Common myeloid progenitor, CD34-positive (primary cell): ENCODE measurements at regions of chr11 and their contacts with region 1.

Region 1: GRCh38 chr11:96228473-96228891 is 114.5 kb downstream of the MAML2 start:
- DNase-seq: no peak
- H3K4me3 ChIP-seq: no peak overlapping the region
- H3K27ac ChIP-seq: no peak overlapping the region
- H3K4me1 ChIP-seq: peaks cover 0 to 26% (median 8%) of the 10 kb centered on the region in 4 experiments
- H3K27me3 ChIP-seq: no peaks in the 10 kb centered on the region

Region 2: GRCh38 chr11:96112201-96113128 is 116.0 kb before region 1 on chr11:
- CTCF ChIA-PET with region 1: no interaction called
- POLR2A ChIA-PET with region 1: no interaction called
- DNase-seq: no peak
- H3K4me3 ChIP-seq: no peak overlapping the region
- H3K27ac ChIP-seq: no peak overlapping the region
- H3K4me1 ChIP-seq: no peaks in the 10 kb centered on the region
- H3K27me3 ChIP-seq: no peaks in the 10 kb centered on the region

Region 3: GRCh38 chr11:96143016-96143670 is 85.3 kb before region 1 on chr11:
- CTCF ChIA-PET with region 1: no interaction called
- POLR2A ChIA-PET with region 1: no interaction called
- DNase-seq: peak in 2 of 3 donors; percentile 27 to 39
- H3K4me3 ChIP-seq: no peak overlapping the region
- H3K27ac ChIP-seq: no peak overlapping the region
- H3K4me1 ChIP-seq: no peaks in the 10 kb centered on the region
- H3K27me3 ChIP-seq: no peaks in the 10 kb centered on the region

Region 4: DNA sequence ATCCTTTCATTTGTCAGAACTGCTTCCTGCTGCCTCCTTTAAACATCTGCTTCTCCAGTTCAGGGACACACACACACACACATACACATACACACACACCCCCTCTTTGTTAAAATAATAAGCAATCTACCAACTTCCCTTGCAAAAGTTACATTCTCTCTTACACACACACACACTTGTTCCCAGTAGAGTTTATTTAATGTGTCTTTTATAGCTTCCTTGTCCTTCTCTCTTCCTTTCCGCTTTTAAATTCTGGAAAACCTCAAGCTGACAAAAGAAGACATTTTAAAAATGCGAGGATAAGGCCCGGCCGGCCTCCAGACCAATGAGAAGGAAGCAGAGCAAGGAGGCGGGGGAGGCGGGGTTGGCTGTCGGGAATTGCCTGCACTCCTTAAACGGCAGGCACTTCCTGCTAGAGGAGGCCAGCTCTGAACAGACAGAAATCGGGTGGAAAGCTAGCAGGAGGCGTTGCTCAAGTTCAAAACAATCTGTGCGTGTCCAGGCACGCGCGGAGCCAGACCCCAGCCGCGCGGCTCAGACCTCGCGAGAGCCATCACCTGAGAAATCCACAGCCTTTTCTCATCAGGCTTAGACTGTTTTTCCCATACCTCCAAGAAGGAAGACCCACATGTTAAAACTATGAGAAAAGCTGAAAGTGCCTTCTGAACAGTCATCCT is 14.6 kb after region 1 on chr11:
- CTCF ChIA-PET with region 1: interaction called, 24 read pairs
- POLR2A ChIA-PET with region 1: no interaction called
- DNase-seq: peak; percentile 90 to 95 (median 94)
- H3K4me3 ChIP-seq: peak overlapping the region; percentile 6 to 79 (median 64)
- H3K27ac ChIP-seq: peak overlapping the region; percentile 46 to 87
- H3K4me1 ChIP-seq: peaks cover 26 to 57% (median 46%) of the 10 kb centered on the region in 4 experiments
- H3K27me3 ChIP-seq: no peaks in the 10 kb centered on the region

Region 5: DNA sequence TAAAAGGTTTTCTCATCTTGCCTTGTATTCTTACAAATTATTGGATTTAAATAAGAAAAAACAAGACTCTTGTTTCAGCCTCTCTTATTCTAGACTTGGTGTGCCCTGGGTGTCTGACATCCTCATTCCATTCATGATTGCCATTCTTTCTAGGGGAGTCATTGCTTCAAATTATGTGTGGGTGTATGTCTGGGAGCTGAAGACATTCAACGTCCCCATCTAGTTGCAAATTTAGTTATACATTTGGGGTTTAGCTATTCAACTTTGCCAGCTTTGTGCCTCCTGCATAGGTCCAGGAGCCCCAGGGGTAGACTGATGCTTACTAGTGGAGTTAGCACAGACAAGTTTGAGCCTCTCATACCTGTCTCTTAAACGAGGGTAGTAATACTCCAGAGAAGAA is 96.5 kb after region 1 on chr11:
- CTCF ChIA-PET with region 1: no interaction called
- POLR2A ChIA-PET with region 1: no interaction called
- DNase-seq: no peak
- H3K4me3 ChIP-seq: no peak overlapping the region
- H3K27ac ChIP-seq: no peak overlapping the region
- H3K4me1 ChIP-seq: peaks cover 0 to 2% (median 0%) of the 10 kb centered on the region in 4 experiments
- H3K27me3 ChIP-seq: no peaks in the 10 kb centered on the region